ENCODE measurements at regions of chr13 and their contacts with region 1.

Region 1: DNA sequence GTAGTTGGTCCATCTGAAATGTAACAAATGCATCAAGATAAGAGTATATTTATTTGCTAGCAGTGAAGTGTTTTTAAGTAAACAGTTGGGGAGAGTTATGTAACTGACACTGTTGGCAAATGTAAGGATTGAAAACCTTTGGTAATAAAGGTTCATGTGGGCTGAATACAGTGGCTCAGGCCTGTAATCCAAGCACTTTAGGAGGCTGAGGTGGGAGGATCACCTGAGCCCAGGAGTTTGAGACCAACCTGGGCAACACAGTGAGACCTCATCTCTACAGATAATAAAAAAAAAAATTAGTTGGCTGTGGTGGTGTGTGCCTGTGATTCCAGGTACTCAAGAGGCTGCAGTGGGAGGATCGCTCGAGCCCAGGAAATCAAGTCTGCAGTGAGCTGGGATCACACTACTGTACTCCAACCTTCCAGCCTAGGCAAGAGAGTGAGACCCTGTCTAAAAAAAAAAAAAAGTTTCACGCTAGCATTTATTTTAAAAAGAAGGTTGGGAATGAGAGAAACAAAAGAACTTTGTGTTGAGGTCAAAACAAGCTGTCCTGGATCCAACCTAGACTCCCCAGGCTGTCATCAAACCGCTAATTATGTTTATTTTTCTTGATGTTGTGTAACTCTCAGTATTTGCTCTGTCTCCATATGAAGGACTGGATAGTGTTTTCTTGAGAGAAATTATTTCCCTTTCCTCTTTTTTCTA is 20.7 kb downstream of the SETDB2 start:
- DNase-seq: no peak
- ATAC-seq: no peak
- H3K4me3 ChIP-seq: no peak overlapping the region
- H3K27ac ChIP-seq: no peak overlapping the region
- H3K4me1 ChIP-seq: no peaks in the 10 kb centered on the region
- H3K27me3 ChIP-seq: no peaks in the 10 kb centered on the region
- CTCF ChIP-seq: no peak
- EP300 ChIP-seq: no peak
- POLR2A ChIP-seq: no peak
- RAD21 ChIP-seq: no peak

Region 2: DNA sequence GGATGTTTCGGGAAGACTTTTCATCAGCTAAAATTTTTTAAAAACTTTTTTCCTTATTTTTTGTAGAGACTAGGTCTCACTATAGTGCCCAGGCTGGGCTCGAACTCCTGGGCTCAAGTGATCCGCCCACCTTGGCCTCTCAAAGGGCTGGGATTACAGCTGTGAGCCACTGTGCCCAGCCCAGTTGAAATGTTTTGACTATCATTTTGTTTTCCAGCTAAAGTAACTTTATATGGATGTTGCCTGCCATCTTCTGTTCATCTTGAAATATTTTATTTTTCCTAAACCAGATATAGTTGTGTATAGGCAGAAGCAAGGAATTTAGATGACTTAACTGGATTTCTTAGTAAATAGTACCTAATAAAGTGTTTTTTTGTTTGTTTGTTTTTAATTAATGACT is 27.9 kb before region 1 on chr13:
- CTCF ChIA-PET with region 1: no interaction called
- POLR2A ChIA-PET with region 1: no interaction called
- RAD21 ChIA-PET with region 1: no interaction called
- SMC1A ChIA-PET with region 1: interaction called, 11 read pairs
- in situ Hi-C with region 1: no loop called
- intact Hi-C with region 1: no loop called
- DNase-seq: no peak
- ATAC-seq: no peak
- H3K4me3 ChIP-seq: no peak overlapping the region
- H3K27ac ChIP-seq: no peak overlapping the region
- H3K4me1 ChIP-seq: peaks cover under 1% of the 10 kb centered on the region; the same call in 1 of the 2 replicates
- H3K27me3 ChIP-seq: no peaks in the 10 kb centered on the region
- CTCF ChIP-seq: no peak
- EP300 ChIP-seq: no peak
- POLR2A ChIP-seq: no peak
- RAD21 ChIP-seq: 0 out of 2 replicates have a peak, but pooled peaks have one; percentile 10